Caco-2 (cell line): ENCODE measurements at regions of chr2 and their contacts with region 1.

Region 1: GRCh38 chr2:6526093-6526824 is 339.4 kb downstream of the CMPK2 start:
- DNase-seq: peak in 1 of 2 experiments; percentile 42
- H3K4me3 ChIP-seq: no peak overlapping the region
- H3K4me3 Mint-ChIP-seq: no peak overlapping the region
- H3K27ac Mint-ChIP-seq: no peak overlapping the region
- H3K4me1 ChIP-seq: no peaks in the 10 kb centered on the region
- H3K4me1 Mint-ChIP-seq: no peaks in the 10 kb centered on the region
- H3K27me3 ChIP-seq: no peaks in the 10 kb centered on the region
- H3K27me3 Mint-ChIP-seq: peaks cover 2% of the 10 kb centered on the region
- CTCF ChIP-seq: peak; percentile 29 to 36

Region 2: DNA sequence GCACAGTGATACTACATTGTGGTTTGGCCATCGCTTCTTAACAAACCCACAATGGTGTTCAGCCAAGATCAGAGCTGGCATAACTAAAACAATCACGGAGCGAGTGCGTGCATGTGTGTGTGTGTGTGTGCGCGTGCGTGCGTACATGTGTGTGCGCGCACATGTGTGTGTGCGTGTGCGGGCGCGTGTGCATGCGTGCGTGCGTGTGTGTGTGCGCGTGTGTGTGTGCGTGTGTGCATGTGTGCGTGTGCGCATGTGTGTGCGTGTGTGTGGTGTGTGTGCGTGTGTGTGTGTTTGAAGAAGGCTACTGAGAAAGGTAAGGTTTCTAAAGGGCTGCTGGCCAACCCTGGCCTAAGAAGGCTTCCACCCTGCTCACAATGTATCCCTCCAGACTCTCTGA is 243.0 kb before region 1 on chr2:
- CTCF ChIA-PET with region 1: no interaction called
- POLR2A ChIA-PET with region 1: no interaction called
- intact Hi-C with region 1: no loop called
- DNase-seq: no peak
- H3K4me3 ChIP-seq: no peak overlapping the region
- H3K4me3 Mint-ChIP-seq: no peak overlapping the region
- H3K27ac Mint-ChIP-seq: no peak overlapping the region
- H3K4me1 ChIP-seq: no peaks in the 10 kb centered on the region
- H3K4me1 Mint-ChIP-seq: no peaks in the 10 kb centered on the region
- H3K27me3 ChIP-seq: no peaks in the 10 kb centered on the region
- H3K27me3 Mint-ChIP-seq: no peaks in the 10 kb centered on the region
- CTCF ChIP-seq: no peak

Region 3: DNA sequence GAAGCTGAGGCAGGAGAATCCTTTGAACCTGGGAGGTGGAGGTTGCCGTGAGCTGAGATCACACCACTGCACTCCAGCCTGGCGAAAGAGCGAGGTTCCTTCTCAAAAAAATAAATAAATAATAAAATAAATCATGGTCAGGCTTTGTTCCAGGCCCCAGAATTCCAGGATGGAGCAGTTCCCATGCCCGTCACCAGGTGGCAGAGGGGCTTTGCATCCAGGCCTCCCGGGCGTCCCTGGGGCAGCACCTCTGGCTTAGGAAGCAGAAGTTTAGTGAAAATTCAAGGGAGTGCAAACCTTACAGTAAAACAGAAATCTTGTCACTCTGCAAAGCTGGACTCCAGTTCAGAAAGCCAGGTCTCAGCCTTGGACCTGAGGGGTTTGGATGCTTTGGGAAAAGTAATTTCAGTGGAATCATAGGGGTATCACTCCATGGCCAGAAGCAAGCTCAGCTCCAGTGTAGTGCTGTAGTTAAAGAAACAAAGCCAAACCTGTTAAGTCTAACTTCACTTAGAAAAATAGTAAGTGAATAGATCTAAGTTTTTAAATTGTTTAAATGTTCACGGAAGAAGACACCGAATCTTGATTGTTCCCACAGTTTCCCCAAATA is 173.2 kb before region 1 on chr2:
- CTCF ChIA-PET with region 1: no interaction called
- POLR2A ChIA-PET with region 1: no interaction called
- intact Hi-C with region 1: loop called (anchors 1 kb)
- DNase-seq: peak; percentile 56 to 69
- H3K4me3 ChIP-seq: no peak overlapping the region
- H3K4me3 Mint-ChIP-seq: no peak overlapping the region
- H3K27ac Mint-ChIP-seq: no peak overlapping the region
- H3K4me1 ChIP-seq: no peaks in the 10 kb centered on the region
- H3K4me1 Mint-ChIP-seq: no peaks in the 10 kb centered on the region
- H3K27me3 ChIP-seq: no peaks in the 10 kb centered on the region
- H3K27me3 Mint-ChIP-seq: no peaks in the 10 kb centered on the region
- CTCF ChIP-seq: peak; percentile 53 to 69

Region 4: DNA sequence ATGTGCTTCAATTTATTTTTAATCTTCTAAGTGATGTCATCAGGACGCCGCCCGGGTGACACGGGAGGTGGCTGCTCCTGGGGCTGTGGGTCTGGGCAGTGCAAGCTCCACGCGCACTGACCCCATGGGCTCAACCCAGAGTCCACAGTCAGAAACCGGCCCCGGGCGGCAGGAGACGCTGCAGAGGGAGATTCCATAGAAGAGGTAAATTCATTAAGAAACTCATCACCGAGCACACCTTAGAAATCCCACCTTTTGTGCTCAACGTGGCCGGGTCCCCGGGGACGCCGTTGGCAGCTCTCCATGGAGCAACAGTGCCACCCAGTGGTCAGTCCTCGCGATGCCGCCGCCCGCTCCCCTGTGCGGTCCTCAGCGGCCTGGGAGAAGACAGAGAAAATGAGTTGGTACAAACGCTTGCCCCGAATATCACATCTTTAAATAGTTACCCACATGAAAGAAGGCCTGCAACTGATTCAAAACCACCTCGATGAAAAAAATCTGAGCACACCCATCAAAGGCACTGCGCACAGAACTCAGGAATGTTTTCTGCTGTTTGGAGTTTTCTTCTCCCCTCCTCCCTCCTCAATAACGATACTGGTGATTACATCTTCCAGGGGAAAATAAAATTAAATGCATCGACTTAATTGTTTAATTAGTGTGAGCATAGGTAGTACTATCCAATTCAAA is 246.9 kb after region 1 on chr2:
- CTCF ChIA-PET with region 1: no interaction called
- POLR2A ChIA-PET with region 1: no interaction called
- intact Hi-C with region 1: loop called (anchors 5 kb)
- DNase-seq: peak; percentile 58 to 80
- H3K4me3 ChIP-seq: no peak overlapping the region
- H3K4me3 Mint-ChIP-seq: no peak overlapping the region
- H3K27ac Mint-ChIP-seq: no peak overlapping the region
- H3K4me1 ChIP-seq: no peaks in the 10 kb centered on the region
- H3K4me1 Mint-ChIP-seq: no peaks in the 10 kb centered on the region
- H3K27me3 ChIP-seq: no peaks in the 10 kb centered on the region
- H3K27me3 Mint-ChIP-seq: peaks cover 6% of the 10 kb centered on the region
- CTCF ChIP-seq: peak; percentile 91 to 97